ENCODE measurements at regions of chr12 and their contacts with region 1.

Region 1: DNA sequence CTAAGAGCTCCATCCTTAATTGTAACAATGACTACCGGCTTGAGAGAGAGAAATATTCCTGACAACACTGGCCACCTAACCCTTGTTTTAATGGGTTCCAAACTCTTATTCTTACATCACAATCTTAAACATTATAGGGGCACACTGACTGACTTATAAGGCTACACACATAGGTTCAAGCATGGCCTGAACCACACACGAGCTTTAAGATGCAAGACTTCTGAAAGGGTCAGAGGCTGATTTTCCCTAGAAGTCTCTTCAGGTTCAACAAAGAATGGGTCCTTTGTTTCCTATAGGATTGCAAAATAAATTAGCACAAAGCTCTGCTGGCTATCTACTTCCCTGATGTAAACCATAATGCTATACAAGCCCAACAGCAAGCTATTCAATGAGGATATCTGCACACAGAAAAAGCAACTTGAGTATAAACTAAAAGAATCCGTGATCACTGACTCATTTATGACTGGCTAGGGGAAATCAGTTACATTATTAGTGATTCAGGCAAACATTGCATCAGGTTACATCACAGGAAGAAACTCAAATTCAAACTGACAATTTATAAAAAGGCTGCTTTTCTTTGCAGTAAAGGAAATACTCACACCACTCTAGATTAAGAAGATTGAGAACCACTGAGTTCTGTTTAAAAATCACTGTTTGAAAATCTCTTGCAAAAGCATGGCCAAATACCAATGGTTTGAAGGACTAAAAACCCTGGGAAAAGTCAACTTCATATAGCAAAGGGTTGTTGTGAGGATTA is 8.5 kb downstream of the BTG1 start:
- DNase-seq: peak in 2 of 9 donors; percentile 34 to 40
- ATAC-seq: peak; percentile 12
- H3K4me3 ChIP-seq: peak overlapping the region; percentile 98
- H3K4me3 Mint-ChIP-seq: peak overlapping the region; percentile 94 to 100 (median 98)
- H3K27ac ChIP-seq: peak overlapping the region; percentile 91
- H3K27ac Mint-ChIP-seq: peak overlapping the region; percentile 91 to 100 (median 98)
- H3K4me1 ChIP-seq: peaks cover 34 to 39% of the 10 kb centered on the region in 2 donors
- H3K4me1 Mint-ChIP-seq: peaks cover 46 to 74% (median 51%) of the 10 kb centered on the region in 7 donors
- H3K27me3 ChIP-seq: no peaks in the 10 kb centered on the region
- H3K27me3 Mint-ChIP-seq: no peaks in the 10 kb centered on the region

Region 2: GRCh38 chr12:91382081-91382543 is 755.0 kb before region 1 on chr12:
- CTCF ChIA-PET with region 1: interaction called, 9 read pairs
- POLR2A ChIA-PET with region 1: interaction called, 43 read pairs
- intact Hi-C with region 1: loop called (anchors 1 kb)
- DNase-seq: peak; percentile 67 to 89 (median 78)
- ATAC-seq: peak; percentile 94
- H3K4me3 ChIP-seq: peak overlapping the region; percentile 18
- H3K4me3 Mint-ChIP-seq: peak overlapping the region; percentile 69 to 91 (median 81)
- H3K27ac ChIP-seq: no peak overlapping the region
- H3K27ac Mint-ChIP-seq: peak overlapping the region in 8 of 9 donors; percentile 16 to 85 (median 49)
- H3K4me1 ChIP-seq: no peaks in the 10 kb centered on the region
- H3K4me1 Mint-ChIP-seq: peaks cover 0 to 11% (median 6%) of the 10 kb centered on the region in 7 donors
- H3K27me3 ChIP-seq: no peaks in the 10 kb centered on the region
- H3K27me3 Mint-ChIP-seq: peaks cover 0 to 13% (median 0%) of the 10 kb centered on the region in 5 donors

Region 3: DNA sequence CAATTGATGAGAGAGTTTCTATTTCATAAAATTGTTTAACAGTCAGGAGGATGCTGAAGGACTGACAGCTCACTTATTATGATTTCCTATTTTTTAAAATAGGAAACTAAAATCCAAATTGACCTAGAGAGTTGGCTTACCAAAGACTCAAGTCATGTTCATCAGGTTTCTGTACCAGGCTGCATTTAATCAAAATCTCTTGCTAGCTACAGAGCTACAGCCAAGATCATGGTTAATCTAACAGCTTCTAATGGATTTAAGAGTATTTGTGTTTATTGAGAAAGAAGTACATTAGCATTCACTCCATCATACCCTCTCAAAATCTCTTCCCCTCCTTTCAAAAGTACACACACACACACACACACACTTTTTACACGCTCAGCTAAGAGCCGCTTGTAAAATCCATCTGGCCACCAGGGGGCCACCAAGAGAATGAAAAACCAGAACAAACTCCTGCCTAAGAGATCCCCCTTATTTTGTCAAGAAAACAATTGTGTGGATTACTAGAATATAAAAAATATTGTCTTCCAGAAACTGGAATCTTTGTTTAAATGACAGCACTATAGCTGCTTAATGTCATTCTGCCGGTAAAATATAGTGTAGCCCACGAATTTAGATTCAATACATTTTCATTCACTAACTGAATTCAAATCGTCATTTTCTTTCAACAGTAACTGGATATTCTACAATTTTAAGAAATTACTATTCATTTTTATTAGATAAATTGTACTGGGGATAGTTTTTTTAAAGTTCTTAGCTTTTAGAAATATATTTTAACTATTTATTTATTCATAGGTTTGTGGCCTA is 325.5 kb before region 1 on chr12:
- CTCF ChIA-PET with region 1: interaction called, 5 read pairs
- POLR2A ChIA-PET with region 1: interaction called, 21 read pairs
- intact Hi-C with region 1: loop called in 1 of 2 experiments (anchors 1 kb)
- DNase-seq: peak; percentile 64 to 79 (median 70)
- ATAC-seq: peak; percentile 90
- H3K4me3 ChIP-seq: peak overlapping the region; percentile 37
- H3K4me3 Mint-ChIP-seq: peak overlapping the region in 9 of 10 donors; percentile 31 to 80 (median 52)
- H3K27ac ChIP-seq: peak overlapping the region; percentile 22
- H3K27ac Mint-ChIP-seq: peak overlapping the region in 8 of 9 donors; percentile 81 to 97 (median 86)
- H3K4me1 ChIP-seq: peaks cover 0 to 15% of the 10 kb centered on the region in 2 donors
- H3K4me1 Mint-ChIP-seq: peaks cover 10 to 48% (median 35%) of the 10 kb centered on the region in 7 donors
- H3K27me3 ChIP-seq: no peaks in the 10 kb centered on the region
- H3K27me3 Mint-ChIP-seq: no peaks in the 10 kb centered on the region

Region 4: GRCh38 chr12:92028441-92028709 is 108.8 kb before region 1 on chr12:
- CTCF ChIA-PET with region 1: interaction called, 23 read pairs
- POLR2A ChIA-PET with region 1: interaction called, 377 read pairs
- intact Hi-C with region 1: loop called in 1 of 2 experiments (anchors 1 kb)
- DNase-seq: no peak
- ATAC-seq: no peak
- H3K4me3 ChIP-seq: no peak overlapping the region
- H3K4me3 Mint-ChIP-seq: peak overlapping the region in 7 of 10 donors; percentile 30 to 80 (median 57)
- H3K27ac ChIP-seq: peak overlapping the region; percentile 68
- H3K27ac Mint-ChIP-seq: peak overlapping the region in 8 of 9 donors; percentile 84 to 99 (median 96)
- H3K4me1 ChIP-seq: peaks cover 63 to 64% of the 10 kb centered on the region in 2 donors
- H3K4me1 Mint-ChIP-seq: peaks cover 43 to 92% (median 81%) of the 10 kb centered on the region in 7 donors
- H3K27me3 ChIP-seq: no peaks in the 10 kb centered on the region
- H3K27me3 Mint-ChIP-seq: no peaks in the 10 kb centered on the region

Region 5: DNA sequence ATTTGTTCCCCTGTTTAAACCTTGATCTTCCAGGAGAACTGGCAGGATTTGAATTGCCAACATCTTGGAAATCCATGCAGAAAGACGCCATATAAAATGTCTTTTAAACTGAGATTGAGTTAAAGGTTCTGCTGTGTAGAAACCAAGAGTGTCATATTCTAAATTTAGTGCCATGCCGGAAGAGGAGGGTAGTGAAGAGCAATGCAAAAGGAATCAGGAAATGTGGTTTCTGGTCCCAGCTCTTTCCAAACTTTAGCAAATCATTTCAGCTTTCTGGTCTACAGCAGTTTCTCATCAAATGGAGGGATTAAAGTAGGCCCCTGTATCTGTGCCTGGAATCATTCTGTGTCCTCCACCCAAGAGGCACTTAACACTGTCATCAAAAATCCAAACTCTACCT is 77.2 kb before region 1 on chr12:
- CTCF ChIA-PET with region 1: interaction called, 4 read pairs
- POLR2A ChIA-PET with region 1: interaction called, 33 read pairs
- intact Hi-C with region 1: loop called in 1 of 2 experiments (anchors 1 kb)
- DNase-seq: no peak
- ATAC-seq: no peak
- H3K4me3 ChIP-seq: no peak overlapping the region
- H3K4me3 Mint-ChIP-seq: peak overlapping the region in 8 of 10 donors; percentile 6 to 79 (median 46)
- H3K27ac ChIP-seq: no peak overlapping the region
- H3K27ac Mint-ChIP-seq: peak overlapping the region in 8 of 9 donors; percentile 19 to 98 (median 93)
- H3K4me1 ChIP-seq: peaks cover 10 to 53% of the 10 kb centered on the region in 2 donors
- H3K4me1 Mint-ChIP-seq: peaks cover 39 to 99% (median 94%) of the 10 kb centered on the region in 7 donors
- H3K27me3 ChIP-seq: no peaks in the 10 kb centered on the region
- H3K27me3 Mint-ChIP-seq: no peaks in the 10 kb centered on the region

Region 6: GRCh38 chr12:92118826-92119536 is 18.2 kb before region 1 on chr12:
- CTCF ChIA-PET with region 1: interaction called, 3 read pairs
- POLR2A ChIA-PET with region 1: interaction called, 86 read pairs
- intact Hi-C with region 1: loop called (anchors 1 to 2 kb)
- DNase-seq: no peak
- ATAC-seq: no peak
- H3K4me3 ChIP-seq: no peak overlapping the region
- H3K4me3 Mint-ChIP-seq: peak overlapping the region in 3 of 10 donors; percentile 27 to 50 (median 45)
- H3K27ac ChIP-seq: no peak overlapping the region
- H3K27ac Mint-ChIP-seq: peak overlapping the region in 7 of 9 donors; percentile 24 to 64 (median 48)
- H3K4me1 ChIP-seq: peaks cover 16 to 21% of the 10 kb centered on the region in 2 donors
- H3K4me1 Mint-ChIP-seq: peaks cover 34 to 69% (median 63%) of the 10 kb centered on the region in 7 donors
- H3K27me3 ChIP-seq: no peaks in the 10 kb centered on the region
- H3K27me3 Mint-ChIP-seq: no peaks in the 10 kb centered on the region

Measured in naive thymus-derived CD4-positive, alpha-beta T cell (primary cell).